Lower lobe of right lung (tissue), 2 donors: ENCODE measurements at regions of chr7 and their contacts with region 1.

Region 1: DNA sequence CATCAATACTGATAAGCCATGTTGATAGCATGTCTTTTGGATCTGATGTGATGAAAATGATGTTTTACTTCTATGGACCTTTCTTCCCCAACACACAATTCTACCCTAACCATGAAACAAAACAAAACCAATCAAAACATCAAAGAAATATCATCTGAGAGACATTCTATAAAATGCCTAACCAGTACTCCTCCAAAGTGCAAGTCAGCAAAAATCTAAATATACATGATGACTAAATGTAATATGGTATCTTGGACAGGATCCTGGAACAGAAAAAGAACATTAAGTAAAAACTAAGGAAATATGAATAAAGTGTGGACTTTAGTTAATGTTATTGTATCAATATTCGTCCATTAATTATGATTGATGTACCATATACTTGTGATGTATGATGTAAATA is 625.1 kb downstream of the MAGI2 start:
- DNase-seq: no peak
- ATAC-seq: no peak
- H3K4me3 ChIP-seq: no peak overlapping the region
- H3K27ac ChIP-seq: no peak overlapping the region
- H3K4me1 ChIP-seq: no peaks in the 10 kb centered on the region
- H3K27me3 ChIP-seq: no peaks in the 10 kb centered on the region
- CTCF ChIP-seq: no peak

Region 2: DNA sequence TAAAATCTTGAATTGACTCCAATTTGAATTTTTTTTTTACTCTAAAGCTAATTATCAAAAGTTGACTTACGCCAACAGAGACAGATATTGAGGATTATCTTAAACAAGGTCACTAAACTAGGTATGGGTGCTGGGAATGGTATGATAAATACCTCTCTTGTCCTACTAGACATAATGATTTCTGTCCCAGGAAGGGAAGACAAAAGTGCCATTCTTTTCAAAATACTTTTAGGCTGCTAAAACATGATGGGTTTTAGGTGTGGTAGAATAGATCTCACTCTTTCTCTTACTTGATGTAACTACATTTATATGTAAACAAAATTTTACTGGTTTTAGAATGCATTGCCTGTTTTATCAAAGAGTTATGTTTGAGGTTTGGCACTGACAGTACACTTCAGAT is 1045.2 kb before region 1 on chr7:
- intact Hi-C with region 1: no loop called
- DNase-seq: no peak
- ATAC-seq: no peak
- H3K4me3 ChIP-seq: no peak overlapping the region
- H3K27ac ChIP-seq: no peak overlapping the region
- H3K4me1 ChIP-seq: no peaks in the 10 kb centered on the region
- H3K27me3 ChIP-seq: no peaks in the 10 kb centered on the region
- CTCF ChIP-seq: no peak

Region 3: DNA sequence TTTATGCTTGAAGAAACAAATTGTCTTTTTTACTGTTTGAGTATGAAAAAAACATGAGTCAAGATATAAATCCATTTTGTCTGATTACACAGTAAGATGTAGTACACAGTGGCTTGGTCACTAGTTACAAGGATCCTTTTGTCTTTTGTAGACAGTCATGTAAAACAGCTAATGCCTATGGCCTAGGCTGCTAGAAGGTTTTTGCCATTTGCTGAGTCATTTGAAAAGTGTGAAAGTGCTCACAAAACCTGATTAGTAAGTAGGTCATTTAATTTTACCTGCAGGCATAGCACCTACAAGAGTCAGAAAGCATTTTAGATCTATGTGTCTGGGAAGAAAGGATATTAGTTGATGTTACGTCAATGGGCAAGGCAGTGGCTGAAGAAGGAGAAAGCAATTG is 194.2 kb before region 1 on chr7:
- intact Hi-C with region 1: no loop called
- DNase-seq: no peak
- ATAC-seq: no peak
- H3K4me3 ChIP-seq: no peak overlapping the region
- H3K27ac ChIP-seq: no peak overlapping the region
- H3K4me1 ChIP-seq: no peaks in the 10 kb centered on the region
- H3K27me3 ChIP-seq: no peaks in the 10 kb centered on the region
- CTCF ChIP-seq: no peak

Region 4: DNA sequence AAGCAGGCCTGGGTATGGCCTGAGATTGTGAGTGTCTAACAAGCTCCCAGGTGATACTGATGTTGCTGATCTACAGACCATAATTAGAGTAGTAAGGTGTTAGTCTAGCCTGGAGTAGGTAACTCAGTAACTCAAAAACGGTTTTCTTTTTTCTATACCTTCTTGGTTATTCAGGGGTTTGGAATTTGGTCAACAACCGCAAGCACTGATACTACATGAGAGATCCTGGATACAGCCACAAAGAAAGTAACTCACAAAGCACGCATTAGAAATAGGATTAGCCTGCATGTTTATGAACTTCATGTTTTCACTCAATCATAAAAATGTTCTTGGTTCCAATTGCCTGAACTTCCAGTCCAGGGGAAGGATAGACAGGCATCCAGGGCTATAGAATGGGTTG is 178.3 kb before region 1 on chr7:
- intact Hi-C with region 1: loop called (anchors 5 kb)
- DNase-seq: no peak
- ATAC-seq: no peak
- H3K4me3 ChIP-seq: no peak overlapping the region
- H3K27ac ChIP-seq: no peak overlapping the region
- H3K4me1 ChIP-seq: no peaks in the 10 kb centered on the region
- H3K27me3 ChIP-seq: no peaks in the 10 kb centered on the region
- CTCF ChIP-seq: no peak

Region 5: DNA sequence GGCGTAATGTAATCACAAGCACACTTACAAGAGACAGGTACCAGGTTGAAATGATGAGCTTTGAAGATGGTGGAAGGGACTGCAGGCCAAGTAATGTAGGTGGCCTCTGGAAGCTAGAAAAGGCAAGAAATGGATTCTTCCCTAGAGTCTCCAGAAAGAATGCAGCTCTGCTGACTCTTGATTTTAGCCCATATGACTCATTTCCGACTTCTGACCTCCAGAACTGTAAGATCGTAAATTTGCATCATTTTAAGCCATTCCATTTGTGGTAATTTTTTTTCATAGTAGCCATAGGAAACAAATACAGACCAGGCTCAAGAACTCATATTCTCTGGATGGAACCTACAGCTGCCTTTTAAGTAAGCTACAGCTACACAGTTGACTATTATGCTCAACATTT is 309.6 kb after region 1 on chr7:
- intact Hi-C with region 1: no loop called
- DNase-seq: no peak
- ATAC-seq: no peak
- H3K4me3 ChIP-seq: no peak overlapping the region
- H3K27ac ChIP-seq: no peak overlapping the region
- H3K4me1 ChIP-seq: no peaks in the 10 kb centered on the region
- H3K27me3 ChIP-seq: no peaks in the 10 kb centered on the region
- CTCF ChIP-seq: no peak